ENCODE measurements at regions of chr6 and their contacts with region 1.

Region 1: GRCh38 chr6:8131256-8131897 is 29.0 kb upstream of the EEF1E1 start:
- DNase-seq: no peak
- ATAC-seq: peak; percentile 80 to 92 (median 82)
- H3K4me3 ChIP-seq: no peak overlapping the region
- H3K27ac ChIP-seq: no peak overlapping the region
- H3K4me1 ChIP-seq: no peaks in the 10 kb centered on the region
- H3K27me3 ChIP-seq: no peaks in the 10 kb centered on the region
- CTCF ChIP-seq: peak; percentile 49 to 59 (median 54)
- POLR2A ChIP-seq: no peak

Region 2: DNA sequence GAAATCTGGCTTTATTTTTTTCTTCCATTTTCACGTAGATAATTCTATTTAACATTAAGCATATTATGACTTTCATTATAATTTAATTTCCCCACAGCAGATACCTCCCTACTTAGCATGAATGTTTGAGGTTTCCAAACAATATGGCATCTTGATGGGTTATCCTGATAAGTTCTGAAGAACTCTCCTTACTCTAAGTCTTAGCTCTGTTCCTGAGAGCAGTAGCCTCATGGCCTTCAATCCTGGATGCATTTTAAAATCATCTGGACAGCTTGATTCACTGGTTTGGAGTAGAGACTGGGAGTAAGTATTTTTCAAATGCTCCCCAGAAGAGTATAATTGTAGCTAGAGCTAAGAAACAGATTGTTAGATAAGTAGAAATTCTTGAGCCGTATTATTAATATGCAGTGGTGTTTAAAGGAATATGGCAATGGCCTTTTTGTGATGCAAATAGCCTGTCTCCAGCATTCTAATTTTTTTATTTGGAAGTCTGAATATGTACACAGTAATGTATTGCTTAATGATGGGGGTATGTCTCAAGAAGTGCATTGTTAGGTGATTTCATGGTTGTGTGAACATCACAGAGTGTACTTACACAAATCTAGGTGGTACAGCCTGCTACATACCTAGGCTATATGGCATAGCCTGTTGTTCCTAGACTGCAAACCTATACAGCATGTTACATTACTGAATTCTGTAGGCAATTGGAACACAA is 81.5 kb after region 1 on chr6:
- intact Hi-C with region 1: loop called in 1 of 2 experiments (anchors 5 kb)
- DNase-seq: no peak
- ATAC-seq: no peak
- H3K4me3 ChIP-seq: no peak overlapping the region
- H3K27ac ChIP-seq: no peak overlapping the region
- H3K4me1 ChIP-seq: no peaks in the 10 kb centered on the region
- H3K27me3 ChIP-seq: no peaks in the 10 kb centered on the region
- CTCF ChIP-seq: no peak
- POLR2A ChIP-seq: no peak

Region 3: DNA sequence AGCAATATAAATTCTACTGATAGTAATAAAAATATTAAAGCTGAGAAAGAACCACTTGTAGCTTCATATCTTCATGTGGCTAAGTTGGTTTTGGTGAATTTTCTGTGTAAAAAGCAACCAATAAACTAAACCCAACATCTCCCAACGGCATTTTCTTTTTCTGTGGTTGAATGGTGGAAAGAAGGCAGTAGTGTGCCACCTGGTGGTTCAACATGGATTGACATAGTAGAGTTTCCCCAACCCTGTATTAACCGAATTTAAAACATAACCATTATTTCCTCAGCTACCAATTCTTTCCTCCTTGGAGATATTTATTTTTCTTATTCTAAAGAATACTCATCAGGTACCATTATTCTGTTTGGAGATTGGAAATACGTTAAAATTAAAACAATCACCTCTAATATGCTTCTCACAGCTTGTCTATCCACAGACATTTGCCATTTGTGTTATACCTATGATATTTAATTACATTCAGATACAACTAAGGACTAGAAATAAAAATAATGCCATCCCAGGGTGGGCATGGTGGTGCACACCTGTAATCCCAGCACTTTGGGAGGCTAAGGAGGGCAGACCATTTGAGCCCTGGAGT is 88.1 kb after region 1 on chr6:
- intact Hi-C with region 1: loop called (anchors 5 kb)
- DNase-seq: no peak
- ATAC-seq: peak; percentile 82 to 89 (median 86)
- H3K4me3 ChIP-seq: no peak overlapping the region
- H3K27ac ChIP-seq: no peak overlapping the region
- H3K4me1 ChIP-seq: no peaks in the 10 kb centered on the region
- H3K27me3 ChIP-seq: no peaks in the 10 kb centered on the region
- CTCF ChIP-seq: peak; percentile 77 to 87 (median 81)
- POLR2A ChIP-seq: no peak

Measured in right lobe of liver (tissue), 6 donors.